ENCODE measurements at regions of chr5 and their contacts with region 1.

Region 1: GRCh38 chr5:157761690-157762621 is 18.4 kb downstream of the LSM11 start:
- DNase-seq: peak; percentile 86
- ATAC-seq: peak; percentile 98
- H3K4me3 ChIP-seq: no peak overlapping the region
- H3K27ac ChIP-seq: no peak overlapping the region
- H3K4me1 ChIP-seq: peaks cover 7% of the 10 kb centered on the region; the same call in 1 of the 2 replicates
- H3K27me3 ChIP-seq: no peaks in the 10 kb centered on the region
- CTCF ChIP-seq: peak; percentile 98

Region 2: DNA sequence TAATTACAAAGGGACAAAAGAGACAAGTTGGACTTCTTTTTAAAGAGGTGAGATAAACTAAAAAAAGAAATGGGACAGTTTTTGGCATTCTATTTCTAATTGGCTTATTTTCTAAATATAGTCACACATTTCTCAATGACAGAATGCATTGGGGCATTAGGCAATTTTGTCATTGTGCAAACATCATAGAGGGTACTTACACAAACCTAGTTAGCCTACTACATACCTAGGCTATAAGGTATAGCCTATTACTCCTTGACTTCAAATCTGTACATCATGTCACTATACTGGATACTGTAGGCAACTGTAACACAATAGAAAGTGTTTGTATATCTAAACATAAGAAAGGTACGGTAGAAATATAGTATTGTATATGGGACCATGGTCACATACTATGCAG is 37.6 kb after region 1 on chr5:
- CTCF ChIA-PET with region 1: no interaction called
- POLR2A ChIA-PET with region 1: no interaction called
- intact Hi-C with region 1: loop called (anchors 5 kb)
- DNase-seq: no peak
- ATAC-seq: no peak
- H3K4me3 ChIP-seq: no peak overlapping the region
- H3K27ac ChIP-seq: no peak overlapping the region
- H3K4me1 ChIP-seq: no peaks in the 10 kb centered on the region
- H3K27me3 ChIP-seq: no peaks in the 10 kb centered on the region
- CTCF ChIP-seq: no peak

Region 3: DNA sequence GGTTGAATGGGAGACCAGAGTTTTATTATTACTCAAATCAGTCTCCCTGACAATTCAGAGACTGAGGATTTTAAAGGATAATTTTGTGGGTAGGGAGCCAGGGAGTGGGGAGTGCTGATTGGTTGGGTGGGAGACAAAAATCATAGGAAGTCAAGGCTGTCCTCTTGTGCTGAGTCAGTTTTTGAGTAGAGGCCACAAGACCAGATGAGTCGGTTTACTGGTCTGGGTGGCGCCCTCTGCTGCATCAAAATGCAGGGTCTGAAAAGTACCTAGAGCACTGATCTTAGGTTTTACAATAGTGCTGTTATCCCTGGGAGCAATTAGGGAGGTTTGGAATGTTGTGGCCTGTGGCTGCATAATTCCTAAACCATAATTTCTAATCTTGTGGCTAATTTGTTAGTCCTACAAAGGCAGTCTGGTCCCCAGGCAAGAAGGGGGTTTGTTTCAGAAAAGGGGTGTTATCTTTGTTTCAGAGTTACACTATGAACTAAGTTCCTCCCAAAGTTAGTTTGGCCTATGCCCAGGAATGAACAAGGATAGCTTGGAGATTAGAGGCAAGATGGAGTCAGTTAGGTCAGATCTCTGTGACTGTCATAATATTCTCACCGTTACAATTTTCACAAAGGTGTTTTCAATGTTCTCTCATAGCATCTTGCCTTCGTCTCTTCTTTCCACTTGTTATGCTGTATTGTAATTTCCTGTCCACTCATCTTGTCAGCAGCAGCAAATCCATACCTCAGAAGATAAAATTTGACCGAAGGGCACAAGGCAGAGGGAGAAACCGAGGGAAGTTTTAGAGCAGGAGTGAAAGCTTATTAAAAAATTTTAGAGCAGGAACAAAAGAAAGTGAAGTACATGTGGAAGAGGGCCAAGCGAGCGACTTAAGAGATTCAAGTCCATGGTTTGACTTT is 156.2 kb after region 1 on chr5:
- CTCF ChIA-PET with region 1: no interaction called
- POLR2A ChIA-PET with region 1: no interaction called
- intact Hi-C with region 1: loop called (anchors 1 kb)
- DNase-seq: peak; percentile 92
- ATAC-seq: peak; percentile 95
- H3K4me3 ChIP-seq: no peak overlapping the region
- H3K27ac ChIP-seq: no peak overlapping the region
- H3K4me1 ChIP-seq: 0 out of 2 replicates have a peak, but pooled peaks cover 3% of the 10 kb centered on the region
- H3K27me3 ChIP-seq: no peaks in the 10 kb centered on the region
- CTCF ChIP-seq: peak; percentile 92

Region 4: DNA sequence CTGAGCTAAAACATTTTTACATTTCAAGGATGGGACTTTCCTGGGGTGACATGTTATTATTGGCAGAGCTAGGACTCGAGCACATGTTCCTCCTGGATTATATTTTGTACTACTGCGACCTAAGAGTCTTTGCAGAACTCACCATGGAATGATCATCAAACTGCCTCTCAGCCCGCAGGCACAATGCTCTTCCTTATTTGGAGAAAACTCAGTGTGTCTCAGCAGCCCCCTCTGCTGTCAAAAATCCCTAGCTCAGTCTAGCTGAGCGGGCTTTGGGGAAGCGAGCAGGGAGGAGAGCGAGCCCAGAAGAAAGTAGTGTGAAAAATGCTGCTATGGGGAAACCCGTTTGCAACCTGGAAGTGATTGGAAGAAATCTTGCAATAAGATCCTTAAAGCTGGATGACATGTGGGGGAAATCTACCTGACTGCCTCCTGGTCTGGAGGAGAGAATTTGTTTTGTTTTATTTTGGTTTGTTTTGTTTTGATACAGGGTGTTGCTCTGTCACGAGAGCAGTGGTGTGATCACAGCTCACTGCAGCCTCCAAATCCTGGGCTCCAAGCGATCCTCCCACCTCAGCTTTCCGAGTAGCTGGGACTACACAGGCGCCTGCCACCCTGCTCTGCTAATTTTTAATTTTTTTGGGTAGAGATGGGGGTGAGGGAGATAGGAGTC is 186.9 kb after region 1 on chr5:
- CTCF ChIA-PET with region 1: no interaction called
- POLR2A ChIA-PET with region 1: no interaction called
- intact Hi-C with region 1: loop called (anchors 1 kb)
- DNase-seq: peak; percentile 99
- ATAC-seq: peak; percentile 99
- H3K4me3 ChIP-seq: peak overlapping the region; percentile 35
- H3K27ac ChIP-seq: no peak overlapping the region
- H3K4me1 ChIP-seq: peaks cover 8% of the 10 kb centered on the region
- H3K27me3 ChIP-seq: peaks cover 6% of the 10 kb centered on the region; the same call in 1 of the 2 replicates
- CTCF ChIP-seq: peak; percentile 99

Region 5: GRCh38 chr5:157994906-157995519 is 233.1 kb after region 1 on chr5:
- CTCF ChIA-PET with region 1: no interaction called
- POLR2A ChIA-PET with region 1: no interaction called
- intact Hi-C with region 1: loop called (anchors 1 kb)
- DNase-seq: peak; percentile 89
- ATAC-seq: peak; percentile 80
- H3K4me3 ChIP-seq: no peak overlapping the region
- H3K27ac ChIP-seq: no peak overlapping the region
- H3K4me1 ChIP-seq: peaks cover 28% of the 10 kb centered on the region
- H3K27me3 ChIP-seq: peaks cover 10% of the 10 kb centered on the region
- CTCF ChIP-seq: peak; percentile 96